Left ventricle myocardium superior (tissue), 1 donor: ENCODE measurements at regions of chr11 and their contacts with region 1.

Region 1: DNA sequence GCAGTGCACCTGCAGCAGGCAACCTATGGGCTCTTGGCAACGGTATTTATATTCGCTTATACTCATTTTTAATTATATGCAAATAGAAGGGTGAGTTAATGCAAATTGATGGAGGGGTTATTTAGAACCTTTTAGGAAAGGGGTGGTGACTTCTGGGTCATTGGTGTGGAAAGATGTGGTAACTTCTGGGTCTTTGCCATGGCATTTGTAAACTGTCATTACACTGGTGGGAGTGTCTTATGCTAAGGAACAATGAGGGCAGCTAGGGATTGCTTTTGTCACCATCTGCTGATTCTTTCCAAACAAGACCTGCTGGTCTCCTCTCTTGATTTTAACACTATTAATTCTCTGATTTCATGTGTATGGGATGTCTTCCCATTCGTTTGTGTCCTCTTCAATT is 11.7 kb upstream of the KAT5 start:
- DNase-seq: no peak
- ATAC-seq: no peak

Region 2: GRCh38 chr11:65821116-65821515 is 120.7 kb after region 1 on chr11:
- intact Hi-C with region 1: loop called (anchors 10 kb)
- DNase-seq: no peak
- ATAC-seq: no peak

Region 3: GRCh38 chr11:65868076-65868667 is 167.8 kb after region 1 on chr11:
- intact Hi-C with region 1: no loop called
- DNase-seq: peak; percentile 33
- ATAC-seq: no peak

Region 4: GRCh38 chr11:66051766-66052663 is 351.6 kb after region 1 on chr11 and contains the start of gene SF3B2:
- intact Hi-C with region 1: no loop called
- DNase-seq: peak; percentile 99
- ATAC-seq: peak; percentile 97
- total RNA-seq, gene SF3B2: 70.4 TPM